ENCODE measurements at regions of chr2 and their contacts with region 1.

Region 1: DNA sequence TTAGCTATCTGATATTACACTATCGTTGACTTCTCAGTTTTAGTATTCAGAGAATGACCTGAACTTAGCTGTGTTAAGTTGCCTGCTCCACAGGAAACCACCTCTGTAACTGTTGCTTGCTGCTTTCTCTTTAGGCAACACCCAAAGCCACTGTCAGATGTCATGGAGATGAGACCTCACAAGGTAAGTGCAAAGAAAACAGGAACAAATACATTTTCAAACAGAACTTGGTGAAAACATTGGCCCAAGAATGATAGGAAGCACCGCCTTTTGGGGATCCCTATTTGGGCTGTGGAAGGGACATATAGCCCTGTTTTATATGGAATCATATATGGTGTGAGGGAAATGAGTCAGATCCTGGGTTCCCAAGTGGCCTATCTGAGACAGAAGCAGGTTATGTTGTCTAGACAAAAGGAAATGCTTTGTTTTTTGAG is 143.4 kb downstream of the UBE2E3 start:
- DNase-seq: peak in 8 of 9 donors; percentile 54 to 91 (median 83)
- ATAC-seq: peak; percentile 98
- H3K4me3 ChIP-seq: peak overlapping the region; percentile 37
- H3K4me3 Mint-ChIP-seq: peak overlapping the region; percentile 73 to 92 (median 82)
- H3K27ac ChIP-seq: peak overlapping the region; percentile 83
- H3K27ac Mint-ChIP-seq: peak overlapping the region; percentile 94 to 100 (median 98)
- H3K4me1 ChIP-seq: peaks cover 39 to 47% of the 10 kb centered on the region in 2 donors
- H3K4me1 Mint-ChIP-seq: peaks cover 27 to 81% (median 78%) of the 10 kb centered on the region in 7 donors
- H3K27me3 ChIP-seq: no peaks in the 10 kb centered on the region
- H3K27me3 Mint-ChIP-seq: no peaks in the 10 kb centered on the region

Region 2: DNA sequence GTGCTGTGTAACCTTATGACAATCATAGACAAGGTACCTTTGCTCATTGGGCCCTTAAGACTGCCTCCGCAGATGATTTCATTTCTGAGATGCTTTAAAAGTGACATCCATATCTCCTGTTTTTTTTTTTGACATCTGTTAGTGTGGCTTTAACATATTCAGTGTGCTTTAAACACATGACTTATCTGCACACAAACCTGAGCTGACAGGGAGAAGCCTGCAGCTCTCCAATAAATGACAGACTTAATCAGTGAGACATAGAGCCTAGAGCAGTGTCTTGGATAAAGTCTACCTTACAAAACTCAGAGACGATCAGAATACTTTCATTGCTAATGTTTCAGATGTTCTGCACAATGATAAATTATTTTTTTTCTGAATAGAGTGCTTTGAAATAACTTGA is 12.8 kb before region 1 on chr2:
- CTCF ChIA-PET with region 1: interaction called, 25 read pairs
- POLR2A ChIA-PET with region 1: interaction called, 10 read pairs
- intact Hi-C with region 1: loop called in 1 of 2 experiments (anchors 1 kb)
- DNase-seq: no peak
- ATAC-seq: no peak
- H3K4me3 ChIP-seq: no peak overlapping the region
- H3K4me3 Mint-ChIP-seq: no peak overlapping the region
- H3K27ac ChIP-seq: no peak overlapping the region
- H3K27ac Mint-ChIP-seq: peak overlapping the region in 2 of 9 donors; percentile 34 to 62
- H3K4me1 ChIP-seq: peaks cover 19 to 24% of the 10 kb centered on the region in 2 donors
- H3K4me1 Mint-ChIP-seq: peaks cover 9 to 48% (median 26%) of the 10 kb centered on the region in 7 donors
- H3K27me3 ChIP-seq: no peaks in the 10 kb centered on the region
- H3K27me3 Mint-ChIP-seq: no peaks in the 10 kb centered on the region

Region 3: GRCh38 chr2:181165199-181165868 is 41.5 kb after region 1 on chr2:
- CTCF ChIA-PET with region 1: no interaction called
- POLR2A ChIA-PET with region 1: interaction called, 3 read pairs
- intact Hi-C with region 1: loop called (anchors 1 kb)
- DNase-seq: peak in 5 of 9 donors; percentile 28 to 54 (median 32)
- ATAC-seq: peak; percentile 77
- H3K4me3 ChIP-seq: peak overlapping the region; percentile 40
- H3K4me3 Mint-ChIP-seq: peak overlapping the region; percentile 73 to 87 (median 77)
- H3K27ac ChIP-seq: peak overlapping the region; percentile 58
- H3K27ac Mint-ChIP-seq: peak overlapping the region; percentile 89 to 98 (median 95)
- H3K4me1 ChIP-seq: peaks cover 31 to 45% of the 10 kb centered on the region in 2 donors
- H3K4me1 Mint-ChIP-seq: peaks cover 22 to 64% (median 51%) of the 10 kb centered on the region in 7 donors
- H3K27me3 ChIP-seq: no peaks in the 10 kb centered on the region
- H3K27me3 Mint-ChIP-seq: no peaks in the 10 kb centered on the region

Region 4: DNA sequence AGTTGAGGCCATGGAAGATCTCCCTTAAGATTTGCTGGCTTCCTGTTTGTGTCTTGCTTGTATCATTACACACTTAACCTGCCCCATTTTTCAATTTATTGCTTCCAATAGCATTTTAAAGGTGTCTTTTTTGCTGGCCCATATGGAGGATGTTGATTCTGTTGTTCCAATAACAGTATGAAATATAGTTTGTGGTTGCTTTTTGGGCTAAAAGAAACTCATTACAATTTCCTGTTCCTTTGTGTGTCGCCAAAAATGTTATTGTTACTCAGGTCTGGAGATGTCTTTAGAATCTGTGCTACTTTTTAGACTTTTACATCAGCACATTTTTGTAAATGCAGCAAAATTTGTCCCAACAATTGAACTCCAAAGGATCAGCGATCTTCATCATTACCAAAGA is 99.4 kb after region 1 on chr2:
- CTCF ChIA-PET with region 1: no interaction called
- POLR2A ChIA-PET with region 1: interaction called, 3 read pairs
- intact Hi-C with region 1: loop called (anchors 2 to 5 kb)
- DNase-seq: peak in 6 of 9 donors; percentile 13 to 54 (median 44)
- ATAC-seq: no peak
- H3K4me3 ChIP-seq: peak overlapping the region; percentile 0
- H3K4me3 Mint-ChIP-seq: peak overlapping the region in 9 of 10 donors; percentile 58 to 84 (median 66)
- H3K27ac ChIP-seq: peak overlapping the region; percentile 4
- H3K27ac Mint-ChIP-seq: peak overlapping the region; percentile 57 to 97 (median 88)
- H3K4me1 ChIP-seq: peaks cover 25% of the 10 kb centered on the region in 2 donors
- H3K4me1 Mint-ChIP-seq: peaks cover 7 to 64% (median 37%) of the 10 kb centered on the region in 7 donors
- H3K27me3 ChIP-seq: no peaks in the 10 kb centered on the region
- H3K27me3 Mint-ChIP-seq: no peaks in the 10 kb centered on the region

Region 5: GRCh38 chr2:181312515-181312927 is 188.7 kb after region 1 on chr2:
- CTCF ChIA-PET with region 1: interaction called, 4 read pairs
- POLR2A ChIA-PET with region 1: interaction called, 6 read pairs
- intact Hi-C with region 1: loop called in 1 of 2 experiments (anchors 1 kb)
- DNase-seq: peak in 2 of 9 donors; percentile 47 to 54
- ATAC-seq: peak; percentile 64
- H3K4me3 ChIP-seq: peak overlapping the region; percentile 4
- H3K4me3 Mint-ChIP-seq: peak overlapping the region; percentile 60 to 92 (median 80)
- H3K27ac ChIP-seq: peak overlapping the region; percentile 66
- H3K27ac Mint-ChIP-seq: peak overlapping the region; percentile 90 to 100 (median 96)
- H3K4me1 ChIP-seq: peaks cover 35 to 47% of the 10 kb centered on the region in 2 donors
- H3K4me1 Mint-ChIP-seq: peaks cover 28 to 67% (median 57%) of the 10 kb centered on the region in 7 donors
- H3K27me3 ChIP-seq: no peaks in the 10 kb centered on the region
- H3K27me3 Mint-ChIP-seq: no peaks in the 10 kb centered on the region